Gastrocnemius medialis (tissue), 4 donors: ENCODE measurements at regions of chr16 and their contacts with region 1.

Region 1: DNA sequence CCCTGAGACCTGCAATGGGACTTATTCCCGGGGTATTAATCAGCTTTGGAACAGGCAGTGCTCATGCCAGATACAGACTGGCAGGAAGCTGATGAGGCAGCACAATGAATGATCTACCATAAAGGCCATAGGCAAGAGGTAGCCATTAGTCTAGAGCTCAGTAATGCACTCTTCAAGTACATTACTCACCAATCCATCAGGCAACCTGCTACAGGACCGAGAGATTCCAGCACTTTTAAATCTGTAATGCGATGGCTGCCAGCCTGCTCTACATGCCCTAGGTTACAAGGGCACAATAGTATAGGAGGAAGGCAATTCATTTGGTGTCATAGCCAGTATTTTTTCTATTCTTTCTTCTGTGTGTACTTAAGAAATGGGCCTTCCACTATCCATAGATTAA is 217.8 kb upstream of the PMFBP1 start:
- DNase-seq: no peak
- ATAC-seq: no peak
- H3K4me3 ChIP-seq: no peak overlapping the region
- H3K27ac ChIP-seq: no peak overlapping the region
- H3K4me1 ChIP-seq: no peaks in the 10 kb centered on the region
- H3K27me3 ChIP-seq: no peaks in the 10 kb centered on the region
- CTCF ChIP-seq: no peak
- POLR2A ChIP-seq: no peak

Region 2: GRCh38 chr16:72355561-72355960 is 34.2 kb before region 1 on chr16:
- in situ Hi-C with region 1: no loop called
- intact Hi-C with region 1: loop called (anchors 2 kb)
- DNase-seq: no peak
- ATAC-seq: no peak
- H3K4me3 ChIP-seq: no peak overlapping the region
- H3K27ac ChIP-seq: no peak overlapping the region
- H3K4me1 ChIP-seq: no peaks in the 10 kb centered on the region
- H3K27me3 ChIP-seq: no peaks in the 10 kb centered on the region
- CTCF ChIP-seq: no peak
- POLR2A ChIP-seq: no peak